Activated CD4-positive, alpha-beta T cell treated with anti-CD3 and anti-CD28 coated beads for 36 hours (primary cell): ENCODE measurements at regions of chr18 and their contacts with region 1.

Region 1: GRCh38 chr18:51537487-51537886 is 340.0 kb upstream of the MEX3C start:
- DNase-seq: peak; percentile 36
- ATAC-seq: peak; percentile 49
- H3K4me3 Mint-ChIP-seq: no peak overlapping the region
- H3K27ac Mint-ChIP-seq: no peak overlapping the region
- H3K4me1 Mint-ChIP-seq: peaks cover 3% of the 10 kb centered on the region
- H3K27me3 Mint-ChIP-seq: peaks cover 5% of the 10 kb centered on the region

Region 2: GRCh38 chr18:51278045-51278649 is 259.3 kb before region 1 on chr18:
- CTCF ChIA-PET with region 1: no interaction called
- POLR2A ChIA-PET with region 1: interaction called, 4 read pairs
- intact Hi-C with region 1: loop called in 1 of 2 experiments (anchors 10 kb)
- DNase-seq: peak; percentile 76
- ATAC-seq: peak; percentile 78
- H3K4me3 Mint-ChIP-seq: no peak overlapping the region
- H3K27ac Mint-ChIP-seq: no peak overlapping the region
- H3K4me1 Mint-ChIP-seq: no peaks in the 10 kb centered on the region
- H3K27me3 Mint-ChIP-seq: peaks cover 7% of the 10 kb centered on the region

Region 3: DNA sequence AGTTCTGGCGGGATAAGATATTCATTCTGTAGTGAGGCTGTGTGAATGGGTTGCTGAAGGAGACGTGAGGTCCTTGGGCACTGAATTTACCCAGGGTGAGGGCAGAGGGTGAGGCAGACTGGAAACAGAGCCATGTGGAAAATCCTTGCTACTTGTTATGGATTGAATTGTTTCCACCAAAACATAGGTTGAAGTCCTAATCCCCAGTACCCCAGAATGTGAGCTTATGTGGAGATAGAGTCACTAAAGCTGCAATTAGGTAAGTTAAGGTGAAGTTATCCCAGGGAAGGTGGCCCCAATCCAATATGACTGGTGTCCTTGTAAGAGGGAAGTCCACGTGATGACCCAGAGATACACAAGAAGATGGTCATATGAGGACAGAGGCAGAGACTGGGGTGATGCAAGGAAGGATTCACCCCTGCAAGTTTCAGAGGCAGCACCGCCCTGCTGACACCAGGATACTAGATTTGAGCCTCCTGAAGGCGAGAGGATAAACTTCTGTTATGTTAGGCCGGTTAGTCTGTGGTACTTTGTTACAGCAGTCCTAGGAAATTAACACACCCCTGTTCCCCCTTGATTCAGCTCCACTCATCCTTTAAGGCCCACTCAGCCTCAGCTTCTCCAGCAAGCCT is 50.6 kb before region 1 on chr18:
- CTCF ChIA-PET with region 1: no interaction called
- POLR2A ChIA-PET with region 1: no interaction called
- intact Hi-C with region 1: loop called in 1 of 2 experiments (anchors 5 kb)
- DNase-seq: no peak
- ATAC-seq: no peak
- H3K4me3 Mint-ChIP-seq: no peak overlapping the region
- H3K27ac Mint-ChIP-seq: no peak overlapping the region
- H3K4me1 Mint-ChIP-seq: no peaks in the 10 kb centered on the region
- H3K27me3 Mint-ChIP-seq: no peaks in the 10 kb centered on the region